AG04449 (cell line): ENCODE measurements at regions of chr16 and their contacts with region 1.

Region 1: DNA sequence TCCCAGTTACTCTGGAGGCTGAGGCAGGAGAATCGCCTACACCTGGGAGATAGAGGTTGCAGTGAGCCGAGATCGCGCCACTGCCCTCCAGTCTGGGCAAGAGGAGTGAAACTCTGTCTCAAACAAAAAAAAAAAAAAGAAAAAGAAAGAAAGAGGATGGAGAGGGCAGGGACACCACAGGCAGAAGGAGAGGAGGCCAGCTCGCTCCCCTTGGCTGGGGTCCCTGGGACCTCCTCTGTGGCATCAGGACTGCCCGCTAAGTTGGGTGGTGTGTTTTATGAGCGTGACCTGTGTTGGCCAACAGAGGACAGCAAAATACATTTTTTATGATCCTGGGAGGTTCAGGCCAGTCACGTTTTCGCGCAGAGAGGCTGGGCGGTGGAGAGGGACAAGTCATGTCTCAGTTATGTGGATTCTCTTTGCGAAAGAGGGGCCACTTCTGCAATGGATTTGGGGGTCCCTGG is 229.6 kb downstream of the MRTFB start:
- DNase-seq: peak; percentile 45
- H3K4me3 ChIP-seq: peak overlapping the region; percentile 67
- CTCF ChIP-seq: peak; percentile 65

Region 2: DNA sequence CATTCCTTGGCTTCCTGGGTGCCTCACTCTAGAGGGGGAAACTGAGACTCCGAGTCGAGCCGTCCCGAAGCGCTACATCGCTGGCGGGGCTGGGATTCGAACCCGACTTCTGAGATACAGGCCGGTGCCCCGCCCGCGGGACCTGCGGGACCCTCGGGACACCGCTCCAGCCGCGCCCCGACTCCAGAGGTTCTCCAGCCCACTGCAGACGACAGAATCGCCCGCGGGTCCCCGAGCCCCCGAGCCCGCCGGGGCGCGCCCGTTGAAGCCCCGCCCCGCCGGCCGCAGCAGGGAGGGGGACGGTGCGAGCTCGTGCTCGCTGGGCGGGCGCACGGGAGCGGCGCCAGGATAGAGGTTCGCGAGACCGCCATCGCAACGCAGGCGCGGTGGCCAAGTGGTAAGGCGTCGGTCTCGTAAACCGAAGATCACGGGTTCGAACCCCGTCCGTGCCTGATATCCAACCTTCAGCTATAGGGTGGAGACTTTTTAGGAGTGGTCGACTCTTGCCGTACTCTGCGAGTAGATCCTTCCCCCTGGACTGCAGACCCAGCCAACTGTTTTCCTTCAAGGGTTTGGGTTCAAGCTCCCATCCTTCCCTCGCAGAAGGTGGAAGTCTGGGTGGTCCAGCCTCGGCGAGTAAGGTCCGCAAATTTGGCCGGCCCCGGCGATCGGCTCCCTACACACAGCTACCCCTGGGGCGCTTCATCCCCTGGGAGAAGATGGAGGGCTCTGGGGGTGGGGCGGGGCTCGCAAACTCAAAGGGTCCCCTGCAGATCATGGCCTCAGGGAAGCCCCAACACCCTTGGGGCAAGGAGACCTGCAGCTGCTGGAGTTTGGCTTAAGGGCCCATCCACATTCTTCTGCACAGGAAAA is 15.0 kb before region 1 on chr16:
- CTCF ChIA-PET with region 1: interaction called, 15 read pairs
- POLR2A ChIA-PET with region 1: interaction called, 6 read pairs
- DNase-seq: peak; percentile 85
- H3K4me3 ChIP-seq: peak overlapping the region; percentile 84
- CTCF ChIP-seq: no peak

Region 3: GRCh38 chr16:14378131-14378551 is 77.4 kb after region 1 on chr16:
- CTCF ChIA-PET with region 1: no interaction called
- POLR2A ChIA-PET with region 1: no interaction called
- DNase-seq: peak; percentile 93
- H3K4me3 ChIP-seq: no peak overlapping the region
- CTCF ChIP-seq: no peak